A673 (cell line): ENCODE measurements at regions of chr2 and their contacts with region 1.

Region 1: GRCh38 chr2:237413777-237414661 is at the start of gene COL6A3:
- DNase-seq: no peak
- H3K4me3 ChIP-seq: no peak within 1 kb of the TSS
- H3K27ac ChIP-seq: no peak within 1 kb of the TSS
- H3K4me1 ChIP-seq: no peaks in the 10 kb centered on the region
- H3K27me3 ChIP-seq: peaks cover 30% of the 10 kb centered on the region
- CTCF ChIP-seq: no peak
- total RNA-seq, gene COL6A3: 0.86 and 2.2 TPM in 2 replicates

Region 2: GRCh38 chr2:237165405-237166276 is 248.4 kb before region 1 on chr2:
- CTCF ChIA-PET with region 1: interaction called, 12 read pairs
- POLR2A ChIA-PET with region 1: no interaction called
- intact Hi-C with region 1: loop called (anchors 5 kb)
- DNase-seq: peak; percentile 45
- H3K4me3 ChIP-seq: no peak overlapping the region
- H3K27ac ChIP-seq: no peak overlapping the region
- H3K4me1 ChIP-seq: no peaks in the 10 kb centered on the region
- H3K27me3 ChIP-seq: peaks cover 3% of the 10 kb centered on the region
- CTCF ChIP-seq: peak; percentile 62

Region 3: DNA sequence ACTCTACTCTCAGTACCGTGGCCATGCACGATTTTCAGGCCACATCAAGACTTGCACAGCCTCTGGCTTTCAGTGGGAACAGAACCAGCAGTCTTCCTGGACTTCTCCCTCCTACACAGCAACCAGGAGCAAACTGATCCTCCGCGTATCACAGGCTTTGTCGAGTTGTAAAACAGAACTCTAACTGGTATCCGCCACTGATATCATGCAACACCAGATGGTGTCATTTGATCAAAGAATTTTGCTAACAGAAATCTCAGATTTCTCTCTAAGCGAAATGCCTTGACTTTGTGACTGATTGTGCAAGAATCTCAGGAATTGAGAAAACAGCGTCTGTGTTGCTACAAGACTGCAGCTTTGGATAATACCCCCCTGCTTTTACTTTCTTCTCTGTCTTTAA is 242.6 kb before region 1 on chr2:
- CTCF ChIA-PET with region 1: no interaction called
- POLR2A ChIA-PET with region 1: no interaction called
- intact Hi-C with region 1: loop called (anchors 5 kb)
- DNase-seq: peak; percentile 73
- H3K4me3 ChIP-seq: no peak overlapping the region
- H3K27ac ChIP-seq: no peak overlapping the region
- H3K4me1 ChIP-seq: no peaks in the 10 kb centered on the region
- H3K27me3 ChIP-seq: peaks cover 15% of the 10 kb centered on the region
- CTCF ChIP-seq: peak; percentile 54